Psoas muscle (tissue), 8 donors: ENCODE measurements at regions of chr12 and their contacts with region 1.

Region 1: DNA sequence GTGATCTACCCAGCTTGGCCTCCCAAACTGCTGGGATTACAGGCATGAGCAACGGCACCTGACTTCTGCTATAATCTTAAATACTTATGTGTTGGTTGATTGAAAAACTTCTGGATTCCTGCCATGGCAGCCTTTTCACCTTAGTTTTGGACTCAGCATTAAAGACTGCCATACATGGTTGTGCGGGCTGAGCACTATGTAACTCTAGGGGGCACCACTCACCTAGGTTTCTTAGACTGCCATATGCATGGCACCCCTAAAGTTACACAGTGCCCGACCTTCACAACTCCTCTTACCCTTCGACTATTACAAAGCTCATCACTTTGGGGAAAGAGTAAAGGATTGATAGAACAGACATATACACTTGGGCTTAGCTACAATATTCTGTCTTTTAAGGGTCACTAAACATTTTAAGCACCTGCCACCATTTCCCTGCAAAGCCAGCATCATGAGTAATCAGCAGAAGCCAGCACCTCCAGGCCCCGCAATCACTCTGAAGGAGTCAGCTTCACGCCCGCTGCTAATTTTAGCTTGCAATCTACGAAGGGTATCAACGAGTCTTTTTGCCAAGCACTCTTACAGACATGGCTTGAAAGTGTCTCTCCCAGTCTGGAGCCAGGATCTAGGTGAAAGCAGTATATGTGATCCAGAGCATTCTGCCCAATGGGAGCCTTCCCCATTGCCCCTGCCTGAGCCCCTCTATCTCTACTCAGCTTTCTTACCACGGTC is 59.8 kb downstream of the SUDS3 start:
- DNase-seq: no peak
- ATAC-seq: peak; percentile 53 to 87 (median 72)
- H3K4me3 ChIP-seq: no peak overlapping the region
- H3K27ac ChIP-seq: no peak overlapping the region
- H3K4me1 ChIP-seq: no peaks in the 10 kb centered on the region
- H3K27me3 ChIP-seq: peaks cover 0 to 3% (median 0%) of the 10 kb centered on the region in 3 donors
- CTCF ChIP-seq: peak; percentile 51

Region 2: DNA sequence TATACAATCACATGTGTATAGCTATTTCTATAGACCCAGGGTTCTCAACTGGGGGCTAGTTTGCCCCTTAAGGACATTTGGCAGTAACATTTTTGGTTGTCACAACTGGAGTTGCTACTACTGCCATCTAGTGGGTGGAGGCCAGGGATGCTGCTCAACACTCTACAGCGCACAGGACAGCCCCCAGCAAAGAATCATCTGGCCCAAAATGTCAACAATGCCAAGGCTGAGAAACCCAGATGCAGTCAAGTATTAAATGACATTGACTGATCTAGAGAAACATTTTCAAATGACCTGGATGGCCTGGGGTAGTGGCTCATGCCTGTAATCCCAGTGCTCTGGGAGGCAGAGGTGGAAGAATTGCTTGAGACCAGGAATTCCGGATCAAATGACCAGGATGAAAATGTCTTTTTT is 381.0 kb before region 1 on chr12:
- intact Hi-C with region 1: no loop called
- DNase-seq: peak; percentile 54 to 69
- ATAC-seq: peak in 3 of 4 donors; percentile 13 to 47 (median 28)
- H3K4me3 ChIP-seq: no peak overlapping the region
- H3K27ac ChIP-seq: peak overlapping the region; percentile 62
- H3K4me1 ChIP-seq: peaks cover 61% of the 10 kb centered on the region
- H3K27me3 ChIP-seq: no peaks in the 10 kb centered on the region
- CTCF ChIP-seq: peak; percentile 41

Region 3: GRCh38 chr12:118467641-118468305 is 31.6 kb after region 1 on chr12:
- intact Hi-C with region 1: no loop called
- DNase-seq: no peak
- ATAC-seq: no peak
- H3K4me3 ChIP-seq: no peak overlapping the region
- H3K27ac ChIP-seq: no peak overlapping the region
- H3K4me1 ChIP-seq: no peaks in the 10 kb centered on the region
- H3K27me3 ChIP-seq: peaks cover 0 to 3% (median 0%) of the 10 kb centered on the region in 3 donors
- CTCF ChIP-seq: no peak

Region 4: GRCh38 chr12:118608770-118609344 is 172.7 kb after region 1 on chr12:
- intact Hi-C with region 1: loop called in 1 of 2 experiments (anchors 10 kb)
- DNase-seq: no peak
- ATAC-seq: peak in 2 of 4 donors; percentile 52 to 70
- H3K4me3 ChIP-seq: no peak overlapping the region
- H3K27ac ChIP-seq: no peak overlapping the region
- H3K4me1 ChIP-seq: no peaks in the 10 kb centered on the region
- H3K27me3 ChIP-seq: no peaks in the 10 kb centered on the region
- CTCF ChIP-seq: peak; percentile 37

Region 5: DNA sequence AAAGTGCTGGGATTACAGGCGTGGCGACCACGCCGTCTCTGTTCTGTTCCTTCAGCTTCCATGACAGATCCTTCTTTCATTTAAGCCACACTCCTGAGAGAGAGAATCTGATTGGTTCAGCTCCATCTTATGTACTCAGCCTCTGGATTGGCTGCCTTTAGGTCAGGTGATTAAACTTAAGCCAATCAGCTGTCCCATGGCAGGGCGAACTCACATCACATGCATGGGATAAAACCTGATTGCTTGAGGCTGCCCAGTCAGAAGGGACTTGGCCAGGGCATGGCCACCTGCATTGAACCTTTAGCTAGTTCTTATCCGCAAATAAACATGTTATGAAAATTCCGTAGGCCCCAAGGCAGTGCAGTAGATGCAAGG is 214.4 kb after region 1 on chr12:
- intact Hi-C with region 1: no loop called
- DNase-seq: no peak
- ATAC-seq: no peak
- H3K4me3 ChIP-seq: no peak overlapping the region
- H3K27ac ChIP-seq: no peak overlapping the region
- H3K4me1 ChIP-seq: no peaks in the 10 kb centered on the region
- H3K27me3 ChIP-seq: no peaks in the 10 kb centered on the region
- CTCF ChIP-seq: no peak